PC-9 (cell line): ENCODE measurements at regions of chr1 and their contacts with region 1.

Region 1: GRCh38 chr1:53781654-53782053 is 42.7 kb upstream of the GLIS1 start:
- DNase-seq: no peak
- H3K4me3 ChIP-seq: no peak overlapping the region
- H3K27ac ChIP-seq: no peak overlapping the region
- H3K4me1 ChIP-seq: no peaks in the 10 kb centered on the region
- H3K27me3 ChIP-seq: no peaks in the 10 kb centered on the region
- CTCF ChIP-seq: no peak

Region 2: GRCh38 chr1:52348704-52349300 is 1432.9 kb before region 1 on chr1:
- CTCF ChIA-PET with region 1: no interaction called
- POLR2A ChIA-PET with region 1: interaction called, 24 read pairs
- intact Hi-C with region 1: no loop called
- DNase-seq: peak in 1 of 2 experiments; percentile 23
- H3K4me3 ChIP-seq: no peak overlapping the region
- H3K27ac ChIP-seq: no peak overlapping the region
- H3K4me1 ChIP-seq: no peaks in the 10 kb centered on the region
- H3K27me3 ChIP-seq: no peaks in the 10 kb centered on the region
- CTCF ChIP-seq: 0 out of 2 replicates have a peak, but pooled peaks have one; percentile 17

Region 3: GRCh38 chr1:52927212-52928014 is 854.2 kb before region 1 on chr1 and contains the start of gene SCP2:
- CTCF ChIA-PET with region 1: no interaction called
- POLR2A ChIA-PET with region 1: interaction called, 21 read pairs
- intact Hi-C with region 1: no loop called
- DNase-seq: peak; percentile 45 to 71
- H3K4me3 ChIP-seq: peak within 1 kb of the TSS; percentile 97
- H3K27ac ChIP-seq: no peak within 1 kb of the TSS
- H3K4me1 ChIP-seq: 0 out of 2 replicates have a peak, but pooled peaks cover 9% of the 10 kb centered on the region
- H3K27me3 ChIP-seq: no peaks in the 10 kb centered on the region
- CTCF ChIP-seq: no peak
- total RNA-seq, gene SCP2: 87.8 and 95.8 TPM in 2 replicates

Region 4: DNA sequence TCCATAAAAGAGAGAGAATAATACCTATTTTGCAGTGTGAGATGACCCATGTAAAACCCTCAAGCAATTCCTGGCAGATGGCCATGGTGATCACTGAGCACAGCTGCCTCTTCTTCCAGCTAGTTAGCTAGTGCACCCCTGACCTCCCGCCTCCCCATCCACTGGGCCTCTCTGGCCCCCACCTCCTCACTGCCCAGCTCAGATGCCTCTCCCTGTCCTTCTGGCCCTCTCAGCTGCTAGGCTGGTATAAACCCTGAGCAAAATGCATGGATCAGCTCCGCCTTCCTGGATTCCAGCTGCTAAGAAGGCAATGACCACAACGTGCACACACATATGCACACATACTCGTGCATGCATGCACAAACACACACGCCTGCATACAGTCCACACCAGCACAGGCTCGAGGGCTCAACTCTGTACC is 205.3 kb before region 1 on chr1:
- CTCF ChIA-PET with region 1: interaction called, 14 read pairs
- POLR2A ChIA-PET with region 1: no interaction called
- intact Hi-C with region 1: no loop called
- DNase-seq: no peak
- H3K4me3 ChIP-seq: no peak overlapping the region
- H3K27ac ChIP-seq: no peak overlapping the region
- H3K4me1 ChIP-seq: peaks cover 19% of the 10 kb centered on the region
- H3K27me3 ChIP-seq: no peaks in the 10 kb centered on the region
- CTCF ChIP-seq: no peak